ENCODE measurements at regions of chr1 and their contacts with region 1.

Region 1: GRCh38 chr1:174159252-174160108 is at the start of gene RABGAP1L:
- DNase-seq: peak; percentile 88
- ATAC-seq: peak; percentile 84
- H3K4me3 Mint-ChIP-seq: peak within 1 kb of the TSS; percentile 96
- H3K27ac Mint-ChIP-seq: peak within 1 kb of the TSS; percentile 99
- H3K4me1 Mint-ChIP-seq: peaks cover 72% of the 10 kb centered on the region
- H3K27me3 Mint-ChIP-seq: no peaks in the 10 kb centered on the region
- CTCF ChIP-seq: no peak
- total RNA-seq, gene RABGAP1L: 103 and 126 TPM in 2 replicates

Region 2: GRCh38 chr1:173476664-173477285 is 682.7 kb before region 1 on chr1:
- CTCF ChIA-PET with region 1: no interaction called
- POLR2A ChIA-PET with region 1: no interaction called
- intact Hi-C with region 1: loop called (anchors 2 kb)
- DNase-seq: peak; percentile 70
- ATAC-seq: peak; percentile 94
- H3K4me3 Mint-ChIP-seq: peak overlapping the region; percentile 92
- H3K27ac Mint-ChIP-seq: peak overlapping the region; percentile 95
- H3K4me1 Mint-ChIP-seq: peaks cover 40% of the 10 kb centered on the region
- H3K27me3 Mint-ChIP-seq: no peaks in the 10 kb centered on the region
- CTCF ChIP-seq: no peak

Region 3: GRCh38 chr1:174005032-174005431 is 154.4 kb before region 1 on chr1:
- CTCF ChIA-PET with region 1: no interaction called
- POLR2A ChIA-PET with region 1: interaction called, 15 read pairs
- intact Hi-C with region 1: no loop called
- DNase-seq: no peak
- ATAC-seq: peak; percentile 92
- H3K4me3 Mint-ChIP-seq: no peak overlapping the region
- H3K27ac Mint-ChIP-seq: no peak overlapping the region
- H3K4me1 Mint-ChIP-seq: peaks cover 68% of the 10 kb centered on the region
- H3K27me3 Mint-ChIP-seq: no peaks in the 10 kb centered on the region
- CTCF ChIP-seq: no peak

Region 4: GRCh38 chr1:174097426-174097825 is 62.1 kb before region 1 on chr1:
- CTCF ChIA-PET with region 1: no interaction called
- POLR2A ChIA-PET with region 1: interaction called, 4 read pairs
- intact Hi-C with region 1: loop called (anchors 10 kb)
- DNase-seq: no peak
- ATAC-seq: no peak
- H3K4me3 Mint-ChIP-seq: no peak overlapping the region
- H3K27ac Mint-ChIP-seq: no peak overlapping the region
- H3K4me1 Mint-ChIP-seq: no peaks in the 10 kb centered on the region
- H3K27me3 Mint-ChIP-seq: no peaks in the 10 kb centered on the region
- CTCF ChIP-seq: no peak

Region 5: DNA sequence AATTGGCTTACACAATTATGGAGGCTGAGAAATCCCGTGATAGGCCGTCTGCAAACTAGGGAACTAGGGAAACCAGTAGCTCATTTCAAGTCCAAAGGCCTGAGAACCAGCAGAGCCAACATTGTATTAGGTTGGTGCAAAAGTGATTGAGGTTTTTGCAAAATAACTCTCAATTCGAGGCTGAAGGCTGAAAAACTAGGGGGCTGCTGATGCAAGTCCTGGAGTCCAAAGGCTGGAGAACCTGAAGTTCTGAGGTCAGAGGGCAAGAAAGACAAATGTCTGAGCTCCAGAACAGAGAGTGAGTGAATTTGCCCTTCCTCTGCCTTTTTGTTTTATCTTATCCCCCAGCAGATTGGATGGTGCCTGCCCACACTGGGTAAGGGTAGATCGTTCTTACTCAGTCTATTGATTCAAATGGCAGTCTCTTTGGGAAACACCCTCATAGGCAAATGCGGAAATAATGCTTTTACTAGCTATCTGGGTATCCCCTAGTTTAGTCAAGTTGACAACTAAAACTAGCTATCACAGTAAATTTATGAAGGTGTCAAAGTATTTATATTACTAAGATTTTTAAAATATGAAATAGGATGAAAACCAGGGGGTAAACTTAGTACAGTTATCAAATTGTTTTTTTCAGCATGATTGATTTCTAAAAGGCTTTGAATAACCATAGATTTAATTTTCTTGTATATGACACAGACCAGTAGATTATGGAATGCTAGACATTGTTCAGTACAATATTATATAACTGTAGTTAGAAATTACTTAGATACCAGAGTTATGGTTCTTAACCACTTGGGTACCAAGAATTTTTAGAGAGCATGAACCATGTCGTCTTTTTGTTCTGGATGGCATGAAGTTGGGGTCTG is 15.2 kb after region 1 on chr1:
- CTCF ChIA-PET with region 1: interaction called, 3 read pairs
- POLR2A ChIA-PET with region 1: interaction called, 13 read pairs
- intact Hi-C with region 1: loop called (anchors 2 kb)
- DNase-seq: no peak
- ATAC-seq: peak; percentile 50
- H3K4me3 Mint-ChIP-seq: no peak overlapping the region
- H3K27ac Mint-ChIP-seq: peak overlapping the region; percentile 48
- H3K4me1 Mint-ChIP-seq: peaks cover 55% of the 10 kb centered on the region
- H3K27me3 Mint-ChIP-seq: no peaks in the 10 kb centered on the region
- CTCF ChIP-seq: no peak

Region 6: DNA sequence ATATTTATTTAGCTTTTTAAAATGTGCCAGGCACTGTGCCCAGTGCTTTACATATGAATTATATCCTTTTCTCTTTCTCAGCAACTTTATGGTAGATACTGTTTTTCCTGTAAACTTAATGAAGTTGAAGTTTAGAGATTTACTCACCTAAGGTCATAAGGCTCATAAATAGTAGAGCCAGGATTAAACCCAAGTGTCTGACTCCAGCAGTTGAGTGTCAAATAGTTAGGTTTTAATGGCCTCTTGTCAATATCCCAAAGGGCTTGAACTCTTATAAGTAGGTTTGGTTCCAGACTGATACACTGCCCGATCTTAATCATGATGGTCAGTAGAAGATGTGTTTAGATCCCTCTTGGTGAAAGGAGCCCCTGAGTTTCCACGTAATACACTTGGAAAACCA is 37.6 kb after region 1 on chr1:
- CTCF ChIA-PET with region 1: no interaction called
- POLR2A ChIA-PET with region 1: no interaction called
- intact Hi-C with region 1: no loop called
- DNase-seq: no peak
- ATAC-seq: no peak
- H3K4me3 Mint-ChIP-seq: no peak overlapping the region
- H3K27ac Mint-ChIP-seq: no peak overlapping the region
- H3K4me1 Mint-ChIP-seq: peaks cover 38% of the 10 kb centered on the region
- H3K27me3 Mint-ChIP-seq: no peaks in the 10 kb centered on the region
- CTCF ChIP-seq: no peak